CD4-positive, alpha-beta memory T cell (primary cell): ENCODE measurements at regions of chr3 and their contacts with region 1.

Region 1: GRCh38 chr3:132535575-132536441 is 61.3 kb upstream of the ACKR4 start:
- DNase-seq: peak in 4 of 5 donors; percentile 34 to 41 (median 38)
- H3K4me3 ChIP-seq: no peak overlapping the region
- H3K4me3 Mint-ChIP-seq: no peak overlapping the region
- H3K27ac ChIP-seq: no peak overlapping the region
- H3K27ac Mint-ChIP-seq: peak overlapping the region in 2 of 7 donors; percentile 7 to 39
- H3K4me1 ChIP-seq: no peaks in the 10 kb centered on the region
- H3K4me1 Mint-ChIP-seq: no peaks in the 10 kb centered on the region
- H3K27me3 ChIP-seq: no peaks in the 10 kb centered on the region
- H3K27me3 Mint-ChIP-seq: no peaks in the 10 kb centered on the region

Region 2: DNA sequence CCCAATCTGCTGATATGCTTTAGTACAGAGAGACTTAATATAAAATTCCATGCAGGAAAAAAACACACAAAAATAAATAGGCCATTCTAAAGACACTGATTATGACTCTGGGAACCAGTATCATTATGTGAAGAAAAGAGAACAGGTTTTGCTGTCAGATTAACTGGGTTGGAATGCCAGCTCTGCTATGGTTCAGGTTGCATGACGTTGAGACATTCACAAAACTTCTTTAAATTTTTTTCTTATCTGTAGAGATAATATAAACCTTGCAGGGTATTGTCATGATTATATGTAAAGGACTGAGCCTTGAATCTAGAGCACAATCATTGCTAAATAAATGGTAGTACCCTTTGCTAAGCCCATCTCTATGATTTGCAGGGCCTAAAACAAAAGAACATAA is 587.0 kb before region 1 on chr3:
- CTCF ChIA-PET with region 1: no interaction called
- POLR2A ChIA-PET with region 1: no interaction called
- intact Hi-C with region 1: no loop called
- DNase-seq: no peak
- H3K4me3 ChIP-seq: no peak overlapping the region
- H3K4me3 Mint-ChIP-seq: no peak overlapping the region
- H3K27ac ChIP-seq: no peak overlapping the region
- H3K27ac Mint-ChIP-seq: no peak overlapping the region
- H3K4me1 ChIP-seq: no peaks in the 10 kb centered on the region
- H3K4me1 Mint-ChIP-seq: peaks cover 0 to 6% (median 5%) of the 10 kb centered on the region in 4 donors
- H3K27me3 ChIP-seq: no peaks in the 10 kb centered on the region
- H3K27me3 Mint-ChIP-seq: no peaks in the 10 kb centered on the region

Region 3: DNA sequence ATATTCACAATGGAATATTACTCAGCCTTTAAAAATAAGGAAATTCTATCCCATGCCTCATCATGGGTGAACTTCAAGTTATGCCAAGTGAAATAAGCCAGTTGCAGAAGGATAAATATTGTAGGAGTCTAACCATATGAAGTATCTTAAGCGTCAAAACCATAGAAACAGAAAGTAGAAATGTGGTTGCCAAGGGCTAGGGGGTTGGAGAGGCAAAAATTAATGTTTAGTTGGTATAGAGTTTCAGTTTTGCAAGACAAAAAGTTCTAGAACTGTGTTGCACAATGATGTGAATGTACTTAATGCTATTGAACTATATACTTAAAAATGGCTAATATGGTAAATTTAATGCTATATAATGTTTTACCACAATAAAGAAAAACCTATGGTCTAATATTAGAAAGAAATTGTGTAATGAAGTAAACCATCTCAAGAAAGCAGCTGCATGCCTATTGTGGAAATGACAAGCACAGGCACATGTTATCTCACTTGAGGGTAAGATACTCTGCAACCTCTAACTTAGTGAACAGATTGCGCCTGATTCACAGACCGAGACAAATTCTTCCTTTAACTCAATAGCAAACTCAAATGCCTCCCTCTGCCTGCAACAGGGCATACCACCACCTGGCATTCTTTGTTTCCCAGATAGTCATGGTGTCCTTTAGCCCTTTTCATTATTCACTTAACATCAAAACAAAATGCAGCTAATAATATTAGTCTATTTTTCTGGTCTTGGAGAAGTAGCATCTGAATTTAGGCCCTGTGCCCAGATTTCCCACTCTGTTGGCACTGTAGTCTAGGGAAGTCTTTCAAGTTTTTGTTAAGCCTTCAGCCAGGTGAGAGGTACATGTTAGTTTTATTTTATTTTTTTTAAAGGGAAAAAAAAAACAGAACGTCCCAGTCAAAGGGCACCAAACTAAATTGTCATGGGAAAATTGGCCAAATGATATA is 298.8 kb before region 1 on chr3:
- CTCF ChIA-PET with region 1: no interaction called
- POLR2A ChIA-PET with region 1: no interaction called
- intact Hi-C with region 1: no loop called
- DNase-seq: no peak
- H3K4me3 ChIP-seq: no peak overlapping the region
- H3K4me3 Mint-ChIP-seq: no peak overlapping the region
- H3K27ac ChIP-seq: no peak overlapping the region
- H3K27ac Mint-ChIP-seq: no peak overlapping the region
- H3K4me1 ChIP-seq: no peaks in the 10 kb centered on the region
- H3K4me1 Mint-ChIP-seq: no peaks in the 10 kb centered on the region
- H3K27me3 ChIP-seq: no peaks in the 10 kb centered on the region
- H3K27me3 Mint-ChIP-seq: peaks cover 7% of the 10 kb centered on the region in 2 donors

Region 4: GRCh38 chr3:132352541-132353143 is 183.2 kb before region 1 on chr3:
- CTCF ChIA-PET with region 1: interaction called, 3 read pairs
- POLR2A ChIA-PET with region 1: no interaction called
- intact Hi-C with region 1: loop called (anchors 1 kb)
- DNase-seq: peak; percentile 53 to 67 (median 60)
- H3K4me3 ChIP-seq: no peak overlapping the region
- H3K4me3 Mint-ChIP-seq: no peak overlapping the region
- H3K27ac ChIP-seq: no peak overlapping the region
- H3K27ac Mint-ChIP-seq: peak overlapping the region in 1 of 7 donors; percentile 60
- H3K4me1 ChIP-seq: no peaks in the 10 kb centered on the region
- H3K4me1 Mint-ChIP-seq: peaks cover 0 to 4% (median under 1%) of the 10 kb centered on the region in 4 donors
- H3K27me3 ChIP-seq: no peaks in the 10 kb centered on the region
- H3K27me3 Mint-ChIP-seq: peaks cover 3 to 10% of the 10 kb centered on the region in 2 donors

Region 5: GRCh38 chr3:132522353-132522752 is 13.5 kb before region 1 on chr3:
- CTCF ChIA-PET with region 1: interaction called, 27 read pairs
- POLR2A ChIA-PET with region 1: no interaction called
- intact Hi-C with region 1: no loop called
- DNase-seq: no peak
- H3K4me3 ChIP-seq: no peak overlapping the region
- H3K4me3 Mint-ChIP-seq: no peak overlapping the region
- H3K27ac ChIP-seq: no peak overlapping the region
- H3K27ac Mint-ChIP-seq: peak overlapping the region in 5 of 7 donors; percentile 38 to 84 (median 60)
- H3K4me1 ChIP-seq: no peaks in the 10 kb centered on the region
- H3K4me1 Mint-ChIP-seq: peaks cover 3 to 10% (median 9%) of the 10 kb centered on the region in 4 donors
- H3K27me3 ChIP-seq: no peaks in the 10 kb centered on the region
- H3K27me3 Mint-ChIP-seq: no peaks in the 10 kb centered on the region

Region 6: DNA sequence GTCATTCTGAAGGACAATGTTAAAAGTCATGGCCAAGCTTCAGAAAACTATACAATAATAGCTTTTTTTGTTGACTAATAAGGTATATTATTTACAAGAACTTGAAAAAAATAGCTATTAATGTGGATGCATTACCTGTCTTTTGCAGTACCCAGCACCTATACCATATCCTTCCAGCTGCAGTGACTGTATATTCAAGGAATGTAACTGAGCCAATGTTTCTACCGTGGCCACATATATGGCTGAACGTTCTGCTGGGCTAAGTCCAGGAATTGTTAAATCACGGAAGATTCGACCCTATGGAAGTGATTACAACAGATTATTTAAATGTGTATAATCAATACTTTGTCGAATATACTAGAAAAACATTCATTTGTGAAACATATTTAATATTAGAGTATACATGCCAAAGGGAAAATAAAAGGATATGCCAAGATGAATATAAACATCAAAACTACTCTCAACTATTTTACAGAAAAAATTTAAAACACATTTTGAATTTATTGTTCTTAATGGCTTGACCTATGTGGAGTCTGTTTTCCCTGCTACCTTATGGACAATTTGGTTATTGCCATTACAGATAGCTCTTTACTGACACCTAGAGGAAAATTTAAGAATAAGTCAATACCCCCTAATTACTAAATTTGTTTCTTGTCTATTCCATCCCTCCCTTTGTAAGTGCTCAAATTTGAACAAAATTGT is 106.2 kb after region 1 on chr3:
- CTCF ChIA-PET with region 1: interaction called, 90 read pairs
- POLR2A ChIA-PET with region 1: no interaction called
- intact Hi-C with region 1: loop called (anchors 1 kb)
- DNase-seq: peak in 4 of 5 donors; percentile 21 to 41 (median 35)
- H3K4me3 ChIP-seq: no peak overlapping the region
- H3K4me3 Mint-ChIP-seq: no peak overlapping the region
- H3K27ac ChIP-seq: no peak overlapping the region
- H3K27ac Mint-ChIP-seq: no peak overlapping the region
- H3K4me1 ChIP-seq: no peaks in the 10 kb centered on the region
- H3K4me1 Mint-ChIP-seq: peaks cover 0 to 2% (median 0%) of the 10 kb centered on the region in 4 donors
- H3K27me3 ChIP-seq: no peaks in the 10 kb centered on the region
- H3K27me3 Mint-ChIP-seq: no peaks in the 10 kb centered on the region